Activated CD8-positive, alpha-beta T cell treated with anti-CD3 and anti-CD28 coated beads for 36 hours (primary cell): ENCODE measurements at regions of chr12 and their contacts with region 1.

Region 1: GRCh38 chr12:76083904-76084862 is at the start of gene NAP1L1:
- DNase-seq: peak; percentile 99
- ATAC-seq: peak; percentile 86
- H3K4me3 Mint-ChIP-seq: peak within 1 kb of the TSS; percentile 94
- H3K27ac Mint-ChIP-seq: peak within 1 kb of the TSS; percentile 99
- H3K4me1 Mint-ChIP-seq: peaks cover 49% of the 10 kb centered on the region
- H3K27me3 Mint-ChIP-seq: no peaks in the 10 kb centered on the region
- CTCF ChIP-seq: no peak
- total RNA-seq, gene NAP1L1: 1,090 to 1,104 TPM

Region 2: DNA sequence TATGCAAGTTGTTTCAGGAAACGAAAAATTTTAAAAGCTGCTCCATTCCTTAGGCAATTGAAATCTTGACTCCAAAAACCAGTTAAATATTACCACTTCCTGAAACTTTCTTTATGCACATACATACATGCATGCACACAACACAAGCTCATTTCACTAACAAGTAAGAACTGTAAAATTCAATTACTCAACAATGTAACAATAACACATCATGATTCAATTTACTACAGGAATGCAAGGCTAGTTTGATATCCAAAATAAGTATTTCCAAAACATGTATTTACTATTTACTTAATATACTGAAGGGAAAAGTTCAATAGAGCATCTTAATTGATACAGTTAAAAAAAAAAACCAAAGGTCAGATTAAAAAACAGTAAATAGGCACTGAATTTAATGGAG is 19.3 kb before region 1 on chr12:
- CTCF ChIA-PET with region 1: interaction called, 4 read pairs
- POLR2A ChIA-PET with region 1: interaction called, 10 read pairs
- intact Hi-C with region 1: no loop called
- DNase-seq: no peak
- ATAC-seq: no peak
- H3K4me3 Mint-ChIP-seq: no peak overlapping the region
- H3K27ac Mint-ChIP-seq: peak overlapping the region; percentile 21
- H3K4me1 Mint-ChIP-seq: peaks cover 50% of the 10 kb centered on the region
- H3K27me3 Mint-ChIP-seq: no peaks in the 10 kb centered on the region
- CTCF ChIP-seq: no peak

Region 3: GRCh38 chr12:76158518-76159321 is 74.5 kb after region 1 on chr12:
- CTCF ChIA-PET with region 1: interaction called, 6 read pairs
- POLR2A ChIA-PET with region 1: interaction called, 16 read pairs
- intact Hi-C with region 1: loop called (anchors 2 kb)
- DNase-seq: peak; percentile 94
- ATAC-seq: peak; percentile 95
- H3K4me3 Mint-ChIP-seq: peak overlapping the region; percentile 41
- H3K27ac Mint-ChIP-seq: peak overlapping the region; percentile 40
- H3K4me1 Mint-ChIP-seq: peaks cover 17% of the 10 kb centered on the region
- H3K27me3 Mint-ChIP-seq: peaks cover 7% of the 10 kb centered on the region
- CTCF ChIP-seq: peak; percentile 35

Region 4: GRCh38 chr12:76259106-76259505 is 174.9 kb after region 1 on chr12:
- CTCF ChIA-PET with region 1: no interaction called
- POLR2A ChIA-PET with region 1: no interaction called
- intact Hi-C with region 1: no loop called
- DNase-seq: no peak
- ATAC-seq: no peak
- H3K4me3 Mint-ChIP-seq: no peak overlapping the region
- H3K27ac Mint-ChIP-seq: no peak overlapping the region
- H3K4me1 Mint-ChIP-seq: peaks cover 3% of the 10 kb centered on the region
- H3K27me3 Mint-ChIP-seq: peaks cover 10% of the 10 kb centered on the region
- CTCF ChIP-seq: no peak

Region 5: DNA sequence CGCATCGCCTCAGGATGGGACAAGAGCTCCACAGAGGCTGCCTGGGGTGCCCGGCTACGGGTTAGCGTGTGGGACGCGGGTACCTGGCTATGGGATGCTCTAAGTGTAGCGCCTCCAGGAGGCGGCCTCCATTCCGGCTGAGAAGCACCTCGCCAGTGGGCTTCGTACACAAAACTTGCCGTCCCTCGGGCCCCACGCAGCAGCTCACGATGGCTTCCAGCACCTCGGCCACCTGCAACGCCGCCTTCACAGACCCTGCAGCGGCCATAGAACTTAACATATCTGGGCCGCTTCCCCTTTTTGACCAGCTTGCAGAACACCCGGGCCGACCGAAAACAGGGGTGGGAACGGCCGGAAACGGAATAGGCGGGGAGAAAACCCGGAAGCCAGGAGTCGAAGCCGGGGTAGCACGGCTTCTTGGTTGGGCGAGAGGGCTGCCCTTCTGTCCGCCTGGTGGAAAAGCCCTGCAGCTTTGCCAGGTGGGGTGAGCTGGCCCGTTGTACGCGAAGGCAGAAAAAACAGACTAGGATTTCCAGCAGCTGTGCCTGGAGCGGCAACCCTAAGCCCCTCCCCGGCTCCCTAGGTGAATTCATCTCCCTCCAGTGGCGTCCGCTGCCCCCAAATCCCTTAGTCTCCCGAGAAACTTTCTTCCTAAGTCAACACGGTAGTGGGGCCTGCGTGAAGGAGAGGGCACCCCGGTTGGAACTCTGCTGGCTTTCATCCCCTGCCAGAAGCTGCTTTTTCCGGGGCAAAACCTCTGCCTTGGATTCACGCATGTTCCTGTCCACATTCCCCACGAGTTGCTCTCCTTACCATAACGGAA is 264.1 kb after region 1 on chr12 and contains the start of gene BBS10:
- CTCF ChIA-PET with region 1: interaction called, 5 read pairs
- POLR2A ChIA-PET with region 1: interaction called, 6 read pairs
- intact Hi-C with region 1: loop called (anchors 2 kb)
- DNase-seq: peak; percentile 92
- ATAC-seq: peak; percentile 98
- H3K4me3 Mint-ChIP-seq: peak within 1 kb of the TSS; percentile 95
- H3K27ac Mint-ChIP-seq: peak within 1 kb of the TSS; percentile 92
- H3K4me1 Mint-ChIP-seq: peaks cover 22% of the 10 kb centered on the region
- H3K27me3 Mint-ChIP-seq: no peaks in the 10 kb centered on the region
- CTCF ChIP-seq: peak; percentile 46
- total RNA-seq, gene BBS10: 3.7 to 3.9 TPM

Region 6: GRCh38 chr12:76455582-76456345 is 371.6 kb after region 1 on chr12:
- CTCF ChIA-PET with region 1: interaction called, 3 read pairs
- POLR2A ChIA-PET with region 1: no interaction called
- intact Hi-C with region 1: loop called (anchors 10 kb)
- DNase-seq: peak; percentile 43
- ATAC-seq: peak; percentile 97
- H3K4me3 Mint-ChIP-seq: no peak overlapping the region
- H3K27ac Mint-ChIP-seq: peak overlapping the region; percentile 27
- H3K4me1 Mint-ChIP-seq: peaks cover 22% of the 10 kb centered on the region
- H3K27me3 Mint-ChIP-seq: no peaks in the 10 kb centered on the region
- CTCF ChIP-seq: peak; percentile 64

Region 7: DNA sequence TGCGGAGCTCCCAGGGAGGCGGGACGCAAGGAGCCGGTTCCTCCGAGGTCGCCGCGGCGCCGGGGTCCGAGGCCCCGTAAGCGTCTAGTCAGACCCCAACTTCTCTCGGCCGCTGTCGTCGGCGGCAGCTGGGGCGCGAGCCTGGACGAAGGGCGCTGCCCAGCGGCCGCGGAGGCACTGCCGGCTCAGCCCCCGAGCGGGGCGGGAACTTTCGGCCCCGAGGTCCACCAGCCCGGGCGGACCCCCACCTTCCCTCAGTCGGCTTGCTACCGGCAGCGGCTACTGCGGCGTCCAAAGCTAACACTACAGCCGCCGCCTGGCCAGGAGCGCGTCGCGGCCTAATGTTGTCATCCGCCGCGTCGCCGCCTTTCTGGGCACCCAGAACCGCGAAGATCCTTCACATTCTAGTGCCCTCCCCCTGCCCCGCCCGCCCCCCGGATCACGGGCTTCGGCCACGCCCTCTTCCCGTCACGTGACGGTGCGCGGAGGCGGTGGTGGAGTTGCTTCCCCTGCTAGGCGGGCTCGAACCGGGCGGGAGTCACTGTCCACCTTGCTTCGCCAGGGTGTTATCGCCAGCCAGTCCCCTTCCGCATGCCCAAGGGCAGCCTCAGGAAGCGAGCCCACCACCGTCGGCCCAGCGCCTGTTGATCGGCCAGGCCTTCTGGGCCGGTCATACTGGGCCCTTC is 475.4 kb after region 1 on chr12 and contains the start of gene OSBPL8:
- CTCF ChIA-PET with region 1: no interaction called
- POLR2A ChIA-PET with region 1: interaction called, 9 read pairs
- intact Hi-C with region 1: loop called (anchors 5 kb)
- DNase-seq: peak; percentile 97
- ATAC-seq: peak; percentile 78
- H3K4me3 Mint-ChIP-seq: peak within 1 kb of the TSS; percentile 91
- H3K27ac Mint-ChIP-seq: peak within 1 kb of the TSS; percentile 97
- H3K4me1 Mint-ChIP-seq: peaks cover 34% of the 10 kb centered on the region
- H3K27me3 Mint-ChIP-seq: no peaks in the 10 kb centered on the region
- CTCF ChIP-seq: no peak
- total RNA-seq, gene OSBPL8: 81.1 to 85.6 TPM